Lower leg skin (tissue), 4 donors: ENCODE measurements at regions of chr12 and their contacts with region 1.

Region 1: DNA sequence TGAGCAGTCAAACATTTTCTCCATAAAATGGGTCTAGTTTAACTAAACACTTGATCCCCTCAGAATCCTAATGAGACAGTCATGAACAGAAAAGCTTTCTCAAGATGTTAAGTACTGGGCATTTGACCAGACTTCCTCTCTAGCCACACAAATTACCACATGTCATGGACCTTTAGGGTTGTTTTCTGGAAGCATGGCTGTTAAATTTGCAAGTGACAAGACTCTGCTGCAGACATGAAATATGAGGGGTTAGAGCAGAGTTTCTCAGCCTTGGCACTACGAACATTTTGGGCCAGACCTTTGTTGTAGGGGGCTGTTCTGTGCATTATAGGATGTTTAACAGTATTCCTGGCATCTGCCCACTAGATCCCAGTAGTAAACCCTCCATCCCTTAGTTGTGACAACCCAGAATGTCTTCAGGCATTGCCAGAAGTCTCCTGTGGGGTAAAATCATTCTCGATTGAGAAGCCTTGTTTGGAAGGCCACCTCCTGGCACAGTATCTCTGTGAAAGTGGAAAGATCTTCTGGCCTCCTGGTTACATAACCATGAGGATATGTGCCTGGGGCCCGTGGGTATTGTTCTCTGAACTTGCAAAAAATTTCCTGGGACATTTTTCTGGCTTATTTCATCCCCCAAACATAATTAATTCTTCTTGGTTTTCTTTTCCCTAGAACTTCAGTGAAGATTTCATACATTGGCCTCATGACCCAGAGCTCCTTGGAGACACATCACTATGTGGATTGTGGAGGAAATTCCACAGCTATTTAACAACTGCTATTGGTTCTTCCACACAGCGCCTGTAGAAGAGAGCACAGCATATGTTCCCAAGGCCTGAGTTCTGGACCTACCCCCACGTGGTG is 4.3 kb downstream of the TMEM106C start:
- DNase-seq: no peak
- H3K4me3 ChIP-seq: no peak overlapping the region
- CTCF ChIP-seq: no peak
- POLR2A ChIP-seq: no peak

Region 2: GRCh38 chr12:47328831-47329545 is 638.7 kb before region 1 on chr12:
- intact Hi-C with region 1: loop called (anchors 5 kb)
- DNase-seq: no peak
- H3K4me3 ChIP-seq: no peak overlapping the region
- CTCF ChIP-seq: no peak
- POLR2A ChIP-seq: no peak